Head of caudate nucleus (tissue), 42 donors: ENCODE measurements at regions of chr14 and their contacts with region 1.

Region 1: DNA sequence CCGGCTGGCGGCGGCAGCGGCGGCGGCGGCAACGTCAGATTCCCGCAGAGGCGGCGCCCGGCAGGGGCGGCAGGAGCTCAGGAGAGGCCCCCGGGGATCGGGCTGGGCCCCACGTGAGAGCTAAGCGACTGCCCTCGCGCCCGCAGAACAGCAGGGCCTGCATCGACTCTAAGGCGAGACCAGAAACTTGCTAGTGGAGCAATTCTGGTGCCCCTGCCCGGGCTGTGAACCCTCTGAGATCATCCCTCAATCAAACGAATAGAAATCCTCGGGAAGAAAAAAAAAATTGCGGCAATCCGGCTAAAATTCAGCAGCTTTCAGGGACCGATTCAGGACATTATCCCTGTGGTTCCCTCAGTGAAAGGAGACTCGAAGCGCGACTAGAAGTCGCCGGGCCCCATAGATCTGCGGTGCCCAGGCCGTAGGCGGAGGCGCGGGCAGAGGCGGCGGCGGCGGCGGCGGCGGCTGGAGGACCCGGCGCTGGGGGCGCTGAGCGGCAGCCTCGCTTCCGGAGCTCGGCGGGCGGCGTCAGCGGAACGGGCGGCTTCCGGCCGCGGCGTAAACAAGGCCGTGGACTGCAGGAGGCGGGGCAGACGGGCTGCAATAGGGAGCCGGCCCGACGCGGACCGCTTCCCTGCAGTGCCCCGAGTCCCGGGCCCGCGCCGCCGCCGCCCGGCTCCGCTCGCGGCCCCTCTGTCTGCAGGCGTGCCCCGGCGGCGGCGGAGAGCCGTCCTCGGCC is at the start of gene KLHDC2:
- DNase-seq: peak; percentile 59 to 95 (median 90)

Region 2: GRCh38 chr14:49633640-49634546 is 133.8 kb before region 1 on chr14:
- intact Hi-C with region 1: loop called (anchors 5 kb)
- DNase-seq: peak; percentile 84 to 98 (median 95)

Region 3: DNA sequence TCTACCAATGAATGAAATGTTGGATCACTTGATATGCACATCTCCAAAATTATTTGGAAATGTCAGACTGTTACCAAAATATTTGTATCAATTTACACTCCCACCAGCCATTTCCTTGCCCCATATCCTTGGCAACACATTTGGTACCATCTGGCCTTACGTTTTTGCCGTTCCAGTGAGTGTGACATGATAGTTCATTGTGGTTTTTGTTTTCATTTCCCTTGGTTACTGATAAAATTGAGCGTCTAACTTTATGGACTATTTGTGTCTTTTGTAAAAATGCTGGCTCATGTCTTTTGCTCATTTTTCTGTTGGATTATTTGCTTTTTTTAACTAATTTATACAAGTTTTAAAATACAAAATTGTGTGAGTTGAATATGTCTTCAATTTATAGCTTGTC is 63.8 kb before region 1 on chr14:
- intact Hi-C with region 1: no loop called
- DNase-seq: no peak